Activated CD8-positive, alpha-beta T cell treated with anti-CD3 and anti-CD28 coated beads, Interleukin-2, amount 10 ng/mL, durations not matched to agents 7 days and 5 days (primary cell): ENCODE measurements at regions of chr7 and their contacts with region 1.

Region 1: GRCh38 chr7:139431010-139431409 is 52.5 kb downstream of the KLRG2 start:
- DNase-seq: no peak
- ATAC-seq: no peak
- H3K4me3 Mint-ChIP-seq: no peak overlapping the region
- H3K27ac Mint-ChIP-seq: no peak overlapping the region
- H3K4me1 Mint-ChIP-seq: peaks cover 8% of the 10 kb centered on the region
- H3K27me3 Mint-ChIP-seq: no peaks in the 10 kb centered on the region

Region 2: GRCh38 chr7:139416405-139416804 is 14.6 kb before region 1 on chr7:
- CTCF ChIA-PET with region 1: interaction called, 28 read pairs
- POLR2A ChIA-PET with region 1: interaction called, 4 read pairs
- DNase-seq: no peak
- ATAC-seq: no peak
- H3K4me3 Mint-ChIP-seq: no peak overlapping the region
- H3K27ac Mint-ChIP-seq: no peak overlapping the region
- H3K4me1 Mint-ChIP-seq: no peaks in the 10 kb centered on the region
- H3K27me3 Mint-ChIP-seq: no peaks in the 10 kb centered on the region

Region 3: GRCh38 chr7:139452958-139453672 is 22.1 kb after region 1 on chr7:
- CTCF ChIA-PET with region 1: interaction called, 11 read pairs
- POLR2A ChIA-PET with region 1: no interaction called
- DNase-seq: no peak
- ATAC-seq: no peak
- H3K4me3 Mint-ChIP-seq: no peak overlapping the region
- H3K27ac Mint-ChIP-seq: no peak overlapping the region
- H3K4me1 Mint-ChIP-seq: no peaks in the 10 kb centered on the region
- H3K27me3 Mint-ChIP-seq: no peaks in the 10 kb centered on the region

Region 4: DNA sequence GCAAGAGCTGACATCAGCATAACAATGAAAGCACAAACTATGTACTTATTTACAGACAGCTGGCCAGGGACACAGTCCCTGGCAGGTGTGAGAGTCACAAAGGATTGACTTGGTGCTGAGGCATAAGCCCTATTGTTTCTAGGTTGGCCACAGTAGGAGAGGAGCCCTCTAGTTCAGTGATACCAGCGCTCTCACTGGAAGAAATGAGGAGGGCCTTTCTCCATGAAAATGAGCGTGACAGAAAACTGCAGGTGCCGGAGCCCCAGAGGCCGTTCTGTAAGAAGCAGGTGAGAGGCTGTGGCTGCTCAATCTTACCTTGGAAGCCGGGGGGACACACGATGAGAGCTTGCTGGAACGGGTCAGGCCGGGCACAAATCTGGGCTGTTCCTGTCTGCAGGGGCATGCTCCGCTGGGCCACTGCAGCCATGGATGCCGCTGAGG is 183.0 kb after region 1 on chr7:
- CTCF ChIA-PET with region 1: interaction called, 12 read pairs
- POLR2A ChIA-PET with region 1: no interaction called
- DNase-seq: no peak
- ATAC-seq: no peak
- H3K4me3 Mint-ChIP-seq: no peak overlapping the region
- H3K27ac Mint-ChIP-seq: no peak overlapping the region
- H3K4me1 Mint-ChIP-seq: no peaks in the 10 kb centered on the region
- H3K27me3 Mint-ChIP-seq: no peaks in the 10 kb centered on the region